PC-9 (cell line): ENCODE measurements at regions of chr16 and their contacts with region 1.

Region 1: GRCh38 chr16:552171-552570 is 8.0 kb upstream of the PRR35 start:
- DNase-seq: no peak
- H3K4me3 ChIP-seq: no peak overlapping the region
- H3K27ac ChIP-seq: no peak overlapping the region
- H3K4me1 ChIP-seq: no peaks in the 10 kb centered on the region
- H3K27me3 ChIP-seq: no peaks in the 10 kb centered on the region
- CTCF ChIP-seq: no peak

Region 2: DNA sequence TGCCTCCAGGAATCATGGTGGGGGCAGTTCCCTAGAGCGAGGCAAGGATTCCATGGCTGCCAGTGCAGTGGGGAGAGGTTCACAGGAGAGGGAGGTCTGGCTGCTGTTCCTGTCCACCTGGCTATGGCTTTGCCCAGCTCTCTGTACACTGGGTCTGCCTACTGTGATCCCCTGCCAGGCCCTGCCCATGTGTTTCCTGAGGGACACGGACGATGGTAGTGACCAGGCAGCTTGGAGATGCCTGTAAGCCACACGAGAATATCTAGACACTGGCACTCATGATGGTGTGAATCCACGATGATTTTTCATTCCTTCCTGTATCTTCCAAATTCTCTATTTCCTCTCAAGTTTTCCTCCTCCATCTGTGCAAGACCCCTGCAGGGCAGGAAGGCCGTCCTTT is 532.8 kb after region 1 on chr16:
- CTCF ChIA-PET with region 1: interaction called, 11 read pairs
- POLR2A ChIA-PET with region 1: no interaction called
- intact Hi-C with region 1: no loop called
- DNase-seq: no peak
- H3K4me3 ChIP-seq: no peak overlapping the region
- H3K27ac ChIP-seq: no peak overlapping the region
- H3K4me1 ChIP-seq: 0 out of 2 replicates have a peak, but pooled peaks cover 8% of the 10 kb centered on the region
- H3K27me3 ChIP-seq: peaks cover 87% of the 10 kb centered on the region
- CTCF ChIP-seq: no peak